Gastrocnemius medialis (tissue), 4 donors: ENCODE measurements at regions of chr16 and their contacts with region 1.

Region 1: GRCh38 chr16:53703590-53704444 is at the starts of genes FTO and RPGRIP1L:
- DNase-seq: peak; percentile 98 to 99
- ATAC-seq: peak; percentile 99 to 100
- H3K4me3 ChIP-seq: peak within 1 kb of the TSS; percentile 85 to 98 (median 92)
- H3K27ac ChIP-seq: peak within 1 kb of the TSS; percentile 83 to 89 (median 86)
- H3K4me1 ChIP-seq: peaks cover 11 to 19% of the 10 kb centered on the region in 2 donors
- H3K27me3 ChIP-seq: no peaks in the 10 kb centered on the region
- CTCF ChIP-seq: peak in 2 of 5 experiments; percentile 30 to 32
- POLR2A ChIP-seq: peak; percentile 13 to 48
- total RNA-seq, gene FTO: 62.0 to 90.1 (median 75.1) TPM
- total RNA-seq, gene RPGRIP1L: 0.53 to 0.75 (median 0.68) TPM

Region 2: GRCh38 chr16:53154513-53154912 is 549.3 kb before region 1 on chr16:
- in situ Hi-C with region 1: no loop called
- intact Hi-C with region 1: no loop called
- DNase-seq: no peak
- ATAC-seq: no peak
- H3K4me3 ChIP-seq: no peak overlapping the region
- H3K27ac ChIP-seq: peak overlapping the region in 1 of 4 donors; percentile 62
- H3K4me1 ChIP-seq: peaks cover 27 to 29% of the 10 kb centered on the region in 2 donors
- H3K27me3 ChIP-seq: no peaks in the 10 kb centered on the region
- CTCF ChIP-seq: no peak
- POLR2A ChIP-seq: no peak

Region 3: DNA sequence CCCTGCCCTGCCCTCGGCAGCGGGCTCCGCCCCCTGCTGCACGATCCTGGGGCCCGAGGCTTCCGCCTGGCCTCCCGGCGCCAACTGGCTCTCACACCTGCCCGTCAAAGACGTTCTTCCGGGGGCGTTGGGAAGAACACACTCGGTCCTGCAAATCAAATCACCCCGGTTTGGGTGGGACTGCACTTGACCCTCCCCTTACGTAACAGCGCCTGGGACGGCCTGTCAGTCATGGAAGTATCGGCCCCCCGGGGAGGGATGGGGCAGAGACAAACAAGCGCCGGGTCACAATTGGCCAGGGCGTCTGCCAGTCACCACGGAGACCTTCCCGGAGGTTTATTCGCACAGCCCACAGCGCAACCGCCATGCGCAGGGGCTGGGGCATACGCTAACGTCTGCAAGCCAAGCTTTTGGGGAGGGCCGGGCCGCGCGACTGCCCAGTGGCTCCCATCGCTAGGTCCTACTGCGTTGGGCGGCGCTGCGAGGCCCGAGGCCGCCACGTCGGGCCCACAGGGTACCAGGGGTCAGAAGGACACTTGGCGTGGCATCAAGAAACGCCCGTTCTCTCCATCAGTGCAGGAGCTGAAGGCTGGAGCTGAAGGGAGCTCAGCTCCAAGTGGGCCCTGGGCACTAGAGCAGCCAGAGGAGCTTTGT is 200.4 kb before region 1 on chr16:
- in situ Hi-C with region 1: no loop called
- intact Hi-C with region 1: loop called (anchors 1 kb)
- DNase-seq: peak; percentile 100
- ATAC-seq: peak; percentile 90 to 91
- H3K4me3 ChIP-seq: peak overlapping the region; percentile 77 to 91 (median 82)
- H3K27ac ChIP-seq: peak overlapping the region; percentile 95 to 98 (median 96)
- H3K4me1 ChIP-seq: peaks cover 32 to 34% of the 10 kb centered on the region in 2 donors
- H3K27me3 ChIP-seq: no peaks in the 10 kb centered on the region
- CTCF ChIP-seq: peak in 1 of 5 experiments; percentile 5
- POLR2A ChIP-seq: peak; percentile 80 to 89

Region 4: DNA sequence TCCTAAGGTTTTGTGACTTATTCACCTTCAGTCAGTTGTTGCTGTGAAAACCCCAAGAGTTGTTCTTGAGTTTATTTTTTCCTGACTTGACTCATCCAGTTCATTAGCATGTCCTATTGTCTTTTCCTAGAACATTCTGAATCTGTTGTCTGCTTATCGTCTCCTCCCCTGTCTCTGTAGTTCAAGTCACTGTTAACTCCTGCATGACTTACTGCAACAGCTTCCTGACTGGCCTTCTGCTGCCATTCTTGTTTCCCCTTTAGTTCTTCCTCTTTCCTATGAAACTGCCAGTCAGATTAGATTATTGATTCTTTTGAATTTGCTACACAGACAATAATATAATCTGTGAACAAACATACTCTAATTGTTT is 161.7 kb after region 1 on chr16:
- in situ Hi-C with region 1: no loop called
- intact Hi-C with region 1: loop called (anchors 5 kb)
- DNase-seq: no peak
- ATAC-seq: peak in 1 of 2 donors; percentile 77
- H3K4me3 ChIP-seq: no peak overlapping the region
- H3K27ac ChIP-seq: peak overlapping the region in 3 of 4 donors; percentile 5 to 49 (median 39)
- H3K4me1 ChIP-seq: peaks cover 7 to 19% of the 10 kb centered on the region in 2 donors
- H3K27me3 ChIP-seq: no peaks in the 10 kb centered on the region
- CTCF ChIP-seq: no peak
- POLR2A ChIP-seq: no peak

Region 5: GRCh38 chr16:55672471-55672870 is 1968.7 kb after region 1 on chr16:
- in situ Hi-C with region 1: no loop called
- intact Hi-C with region 1: loop called (anchors 10 kb)
- DNase-seq: peak; percentile 28 to 43
- ATAC-seq: peak; percentile 40 to 47
- H3K4me3 ChIP-seq: no peak overlapping the region
- H3K27ac ChIP-seq: no peak overlapping the region
- H3K4me1 ChIP-seq: peaks cover 4 to 18% of the 10 kb centered on the region in 2 donors
- H3K27me3 ChIP-seq: no peaks in the 10 kb centered on the region
- CTCF ChIP-seq: no peak
- POLR2A ChIP-seq: no peak